ENCODE measurements at regions of chr12 and their contacts with region 1.

Region 1: GRCh38 chr12:10562306-10562933 is 51.0 kb downstream of the MAGOHB start:
- DNase-seq: peak in 4 of 5 donors; percentile 31 to 45 (median 38)
- H3K4me3 ChIP-seq: no peak overlapping the region
- H3K4me3 Mint-ChIP-seq: no peak overlapping the region
- H3K27ac ChIP-seq: no peak overlapping the region
- H3K27ac Mint-ChIP-seq: no peak overlapping the region
- H3K4me1 ChIP-seq: no peaks in the 10 kb centered on the region
- H3K4me1 Mint-ChIP-seq: no peaks in the 10 kb centered on the region
- H3K27me3 ChIP-seq: no peaks in the 10 kb centered on the region
- H3K27me3 Mint-ChIP-seq: peaks cover 11 to 24% of the 10 kb centered on the region in 2 donors

Region 2: DNA sequence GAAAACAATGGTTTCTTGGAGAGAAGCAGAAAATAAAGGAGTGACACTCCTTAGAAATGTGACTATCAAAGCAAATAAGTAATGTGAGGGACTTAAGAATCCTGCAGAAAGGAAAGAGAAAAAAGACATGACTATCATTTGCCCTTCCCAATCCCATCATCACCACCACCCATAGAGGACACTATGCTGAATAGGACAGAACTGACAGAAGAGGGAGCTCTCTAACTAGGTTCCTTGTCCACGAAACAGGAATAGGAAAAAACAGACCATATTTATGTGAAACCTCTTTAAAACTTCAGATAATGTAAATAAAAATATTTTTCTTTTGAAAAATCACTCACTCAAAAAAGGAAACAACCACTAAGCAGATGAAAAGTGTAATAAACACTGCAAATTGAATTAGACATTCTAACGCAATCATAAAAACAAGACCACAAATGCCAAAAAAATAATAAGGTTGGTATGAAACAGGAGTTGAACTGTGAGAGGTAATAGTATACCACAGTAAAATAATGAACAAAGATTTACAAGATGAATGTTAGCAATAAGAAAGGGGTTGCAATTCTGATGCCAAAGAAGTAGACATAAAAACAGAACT is 230.7 kb before region 1 on chr12:
- CTCF ChIA-PET with region 1: interaction called, 8 read pairs
- POLR2A ChIA-PET with region 1: no interaction called
- intact Hi-C with region 1: loop called (anchors 1 kb)
- DNase-seq: peak in 4 of 5 donors; percentile 14 to 20 (median 18)
- H3K4me3 ChIP-seq: no peak overlapping the region
- H3K4me3 Mint-ChIP-seq: no peak overlapping the region
- H3K27ac ChIP-seq: no peak overlapping the region
- H3K27ac Mint-ChIP-seq: no peak overlapping the region
- H3K4me1 ChIP-seq: no peaks in the 10 kb centered on the region
- H3K4me1 Mint-ChIP-seq: no peaks in the 10 kb centered on the region
- H3K27me3 ChIP-seq: no peaks in the 10 kb centered on the region
- H3K27me3 Mint-ChIP-seq: peaks cover 0 to 4% of the 10 kb centered on the region in 2 donors